ENCODE measurements at regions of chr3 and their contacts with region 1.

Region 1: GRCh38 chr3:43162230-43163084 is 56.6 kb upstream of the POMGNT2 start:
- DNase-seq: peak; percentile 29 to 88 (median 56)
- ATAC-seq: peak; percentile 92
- H3K4me3 ChIP-seq: peak overlapping the region; percentile 35
- H3K4me3 Mint-ChIP-seq: peak overlapping the region; percentile 76
- H3K27ac ChIP-seq: peak overlapping the region; percentile 44 to 91
- H3K27ac Mint-ChIP-seq: peak overlapping the region; percentile 91
- H3K4me1 ChIP-seq: peaks cover 27% of the 10 kb centered on the region
- H3K4me1 Mint-ChIP-seq: peaks cover 29% of the 10 kb centered on the region
- H3K27me3 ChIP-seq: no peaks in the 10 kb centered on the region
- H3K27me3 Mint-ChIP-seq: no peaks in the 10 kb centered on the region
- CTCF ChIP-seq: peak; percentile 73

Region 2: DNA sequence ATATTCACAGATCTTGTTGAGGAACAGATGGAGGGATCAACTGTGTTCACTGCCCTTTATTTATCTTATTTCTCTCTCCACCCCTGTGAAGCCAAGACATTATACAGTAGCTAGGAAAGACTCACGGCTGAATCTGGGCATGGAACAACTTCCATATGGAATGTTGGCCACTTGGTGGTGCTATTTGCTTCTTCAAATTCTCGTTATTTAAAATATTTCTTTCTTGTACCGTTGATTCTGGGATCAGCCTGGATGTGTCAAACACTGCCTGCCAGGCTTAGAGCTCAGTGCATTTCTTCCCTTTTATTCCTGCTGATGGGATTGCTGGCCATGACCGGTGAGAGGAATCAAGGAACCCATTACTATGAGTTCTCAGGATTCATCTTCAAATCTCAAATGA is 200.8 kb before region 1 on chr3:
- CTCF ChIA-PET with region 1: no interaction called
- POLR2A ChIA-PET with region 1: interaction called, 7 read pairs
- intact Hi-C with region 1: loop called in 1 of 2 experiments (anchors 5 kb)
- DNase-seq: peak in 7 of 14 experiments; percentile 4 to 66 (median 54)
- ATAC-seq: no peak
- H3K4me3 ChIP-seq: no peak overlapping the region
- H3K4me3 Mint-ChIP-seq: no peak overlapping the region
- H3K27ac ChIP-seq: no peak overlapping the region
- H3K27ac Mint-ChIP-seq: no peak overlapping the region
- H3K4me1 ChIP-seq: peaks cover 12% of the 10 kb centered on the region
- H3K4me1 Mint-ChIP-seq: peaks cover 37% of the 10 kb centered on the region
- H3K27me3 ChIP-seq: no peaks in the 10 kb centered on the region
- H3K27me3 Mint-ChIP-seq: peaks cover 4% of the 10 kb centered on the region
- CTCF ChIP-seq: peak; percentile 71

Region 3: DNA sequence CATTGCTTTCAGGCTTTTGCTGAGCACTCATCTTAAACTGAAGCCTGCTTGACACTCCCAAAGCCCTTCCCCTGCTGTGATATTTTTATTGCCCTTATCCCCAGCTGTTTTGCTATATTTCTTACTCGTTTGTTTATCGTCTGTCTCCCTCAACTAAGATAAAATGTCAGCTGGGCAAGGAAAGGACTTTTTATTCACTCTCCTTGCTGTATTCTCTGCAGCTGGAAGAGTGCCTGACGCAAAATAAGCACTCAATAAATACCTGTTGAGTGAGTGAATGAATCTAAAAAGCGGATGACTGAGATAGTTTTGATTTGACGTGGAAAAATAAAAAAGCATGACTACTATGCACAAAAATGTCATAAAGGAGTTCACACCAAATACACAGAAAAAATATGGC is 28.2 kb after region 1 on chr3:
- CTCF ChIA-PET with region 1: interaction called, 3 read pairs
- POLR2A ChIA-PET with region 1: interaction called, 13 read pairs
- intact Hi-C with region 1: loop called (anchors 1 to 2 kb)
- DNase-seq: no peak
- ATAC-seq: no peak
- H3K4me3 ChIP-seq: no peak overlapping the region
- H3K4me3 Mint-ChIP-seq: no peak overlapping the region
- H3K27ac ChIP-seq: no peak overlapping the region
- H3K27ac Mint-ChIP-seq: no peak overlapping the region
- H3K4me1 ChIP-seq: peaks cover 47% of the 10 kb centered on the region
- H3K4me1 Mint-ChIP-seq: peaks cover 62% of the 10 kb centered on the region
- H3K27me3 ChIP-seq: no peaks in the 10 kb centered on the region
- H3K27me3 Mint-ChIP-seq: no peaks in the 10 kb centered on the region
- CTCF ChIP-seq: no peak

Region 4: DNA sequence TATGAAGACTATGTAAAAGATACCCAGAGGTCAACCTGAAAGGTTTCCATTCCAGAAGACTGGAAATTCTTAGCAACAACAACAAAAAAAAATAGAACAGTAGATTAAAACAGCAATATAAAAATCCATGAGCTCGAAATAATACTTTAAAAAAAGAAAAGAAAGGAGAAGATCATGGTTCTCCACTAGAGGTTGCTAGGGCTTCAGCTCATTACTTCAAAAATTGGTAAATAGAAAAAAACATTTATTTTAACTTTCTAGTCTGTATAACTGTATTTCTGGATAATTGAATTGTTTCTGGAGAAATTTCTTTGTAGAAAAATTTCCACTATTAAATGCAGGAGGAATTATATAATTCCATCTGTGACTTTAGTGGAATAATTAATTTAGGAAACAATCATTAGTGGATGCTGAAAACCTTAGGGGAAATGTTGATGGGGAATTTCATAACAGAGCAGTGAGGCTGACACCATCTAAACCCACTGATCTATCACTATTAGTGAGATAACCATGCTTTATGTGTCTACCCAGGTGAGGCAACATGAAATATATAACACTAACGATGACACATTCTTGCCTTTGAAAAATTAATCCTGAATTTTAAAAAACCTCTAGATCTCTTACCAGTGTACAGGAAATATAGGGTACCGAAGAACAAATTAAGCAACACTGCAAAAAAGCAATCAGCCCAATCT is 61.4 kb after region 1 on chr3:
- CTCF ChIA-PET with region 1: interaction called, 10 read pairs
- POLR2A ChIA-PET with region 1: interaction called, 26 read pairs
- intact Hi-C with region 1: loop called (anchors 2 to 5 kb)
- DNase-seq: peak in 3 of 14 experiments; percentile 49 to 56 (median 52)
- ATAC-seq: no peak
- H3K4me3 ChIP-seq: no peak overlapping the region
- H3K4me3 Mint-ChIP-seq: peak overlapping the region; percentile 2
- H3K27ac ChIP-seq: no peak overlapping the region
- H3K27ac Mint-ChIP-seq: peak overlapping the region; percentile 86
- H3K4me1 ChIP-seq: peaks cover 28% of the 10 kb centered on the region
- H3K4me1 Mint-ChIP-seq: peaks cover 60% of the 10 kb centered on the region
- H3K27me3 ChIP-seq: no peaks in the 10 kb centered on the region
- H3K27me3 Mint-ChIP-seq: no peaks in the 10 kb centered on the region
- CTCF ChIP-seq: peak; percentile 65

Region 5: GRCh38 chr3:43286115-43286840 is 123.8 kb after region 1 on chr3 and contains the start of gene SNRK:
- CTCF ChIA-PET with region 1: interaction called, 4 read pairs
- POLR2A ChIA-PET with region 1: interaction called, 31 read pairs
- intact Hi-C with region 1: loop called (anchors 1 to 2 kb)
- DNase-seq: peak; percentile 84 to 97 (median 92)
- ATAC-seq: peak; percentile 79
- H3K4me3 ChIP-seq: peak within 1 kb of the TSS; percentile 70
- H3K4me3 Mint-ChIP-seq: peak within 1 kb of the TSS; percentile 100
- H3K27ac ChIP-seq: peak within 1 kb of the TSS; percentile 77 to 81
- H3K27ac Mint-ChIP-seq: peak within 1 kb of the TSS; percentile 100
- H3K4me1 ChIP-seq: peaks cover 32% of the 10 kb centered on the region
- H3K4me1 Mint-ChIP-seq: peaks cover 37% of the 10 kb centered on the region
- H3K27me3 ChIP-seq: no peaks in the 10 kb centered on the region
- H3K27me3 Mint-ChIP-seq: peaks cover 4% of the 10 kb centered on the region
- CTCF ChIP-seq: peak; percentile 56
- total RNA-seq, gene SNRK: 215 to 217 TPM

Region 6: DNA sequence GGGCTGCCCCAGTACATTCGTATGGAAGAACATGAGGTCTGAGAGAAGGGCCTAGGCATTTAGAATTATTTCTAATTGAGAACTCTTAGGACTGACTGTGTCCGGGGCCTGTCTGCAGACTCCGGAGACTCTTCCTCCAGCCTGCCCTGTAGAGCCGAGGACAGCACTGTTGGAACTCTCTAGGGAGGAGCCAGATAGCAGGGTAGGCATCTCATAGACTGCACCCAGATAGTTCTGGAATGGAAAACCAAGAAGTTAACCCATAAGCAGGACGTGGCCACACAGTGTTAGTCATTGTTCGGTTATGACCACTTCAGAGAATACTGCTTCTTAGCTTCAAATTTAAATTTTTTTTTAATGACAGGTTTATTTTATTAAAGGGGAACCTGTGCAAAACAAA is 183.4 kb after region 1 on chr3:
- CTCF ChIA-PET with region 1: no interaction called
- POLR2A ChIA-PET with region 1: interaction called, 11 read pairs
- intact Hi-C with region 1: no loop called
- DNase-seq: no peak
- ATAC-seq: no peak
- H3K4me3 ChIP-seq: no peak overlapping the region
- H3K4me3 Mint-ChIP-seq: peak overlapping the region; percentile 58
- H3K27ac ChIP-seq: peak overlapping the region; percentile 36 to 62
- H3K27ac Mint-ChIP-seq: peak overlapping the region; percentile 96
- H3K4me1 ChIP-seq: peaks cover 71% of the 10 kb centered on the region
- H3K4me1 Mint-ChIP-seq: peaks cover 91% of the 10 kb centered on the region
- H3K27me3 ChIP-seq: no peaks in the 10 kb centered on the region
- H3K27me3 Mint-ChIP-seq: no peaks in the 10 kb centered on the region
- CTCF ChIP-seq: no peak

Region 7: GRCh38 chr3:43389388-43390254 is 227.2 kb after region 1 on chr3:
- CTCF ChIA-PET with region 1: interaction called, 3 read pairs
- POLR2A ChIA-PET with region 1: interaction called, 14 read pairs
- intact Hi-C with region 1: no loop called
- DNase-seq: peak; percentile 54 to 93 (median 68)
- ATAC-seq: peak; percentile 94
- H3K4me3 ChIP-seq: peak overlapping the region; percentile 1
- H3K4me3 Mint-ChIP-seq: peak overlapping the region; percentile 49
- H3K27ac ChIP-seq: peak overlapping the region; percentile 53 to 83
- H3K27ac Mint-ChIP-seq: peak overlapping the region; percentile 88
- H3K4me1 ChIP-seq: peaks cover 64% of the 10 kb centered on the region
- H3K4me1 Mint-ChIP-seq: peaks cover 83% of the 10 kb centered on the region
- H3K27me3 ChIP-seq: no peaks in the 10 kb centered on the region
- H3K27me3 Mint-ChIP-seq: no peaks in the 10 kb centered on the region
- CTCF ChIP-seq: no peak

Measured in CD4-positive, alpha-beta T cell (primary cell).